Endothelial cell of umbilical vein (primary cell): ENCODE measurements at regions of chr14 and their contacts with region 1.

Region 1: GRCh38 chr14:49620182-49621113 is at the starts of genes MGAT2 and RPL36AL:
- DNase-seq: peak; percentile 99
- H3K4me3 ChIP-seq: peak within 1 kb of the TSS; percentile 59 to 95 (median 83)
- H3K27ac ChIP-seq: peak within 1 kb of the TSS; percentile 85
- H3K4me1 ChIP-seq: peaks cover 40% of the 10 kb centered on the region
- H3K27me3 ChIP-seq: no peaks in the 10 kb centered on the region
- CTCF ChIP-seq: peak; percentile 8 to 51
- POLR2A ChIP-seq: peak; percentile 94
- total RNA-seq, gene MGAT2: 68.1 and 72.6 TPM in 2 replicates
- total RNA-seq, gene RPL36AL: 251 and 260 TPM in 2 replicates

Region 2: GRCh38 chr14:49598485-49599300 is 21.8 kb before region 1 on chr14 and contains the start of gene LRR1:
- CTCF ChIA-PET with region 1: interaction called, 12 read pairs
- POLR2A ChIA-PET with region 1: interaction called, 15 read pairs
- dilution Hi-C with region 1: no loop called
- intact Hi-C with region 1: loop called (anchors 1 kb)
- DNase-seq: peak; percentile 90
- H3K4me3 ChIP-seq: peak within 1 kb of the TSS; percentile 57 to 100 (median 97)
- H3K27ac ChIP-seq: peak within 1 kb of the TSS; percentile 91
- H3K4me1 ChIP-seq: peaks cover 3% of the 10 kb centered on the region
- H3K27me3 ChIP-seq: no peaks in the 10 kb centered on the region
- CTCF ChIP-seq: no peak
- POLR2A ChIP-seq: peak; percentile 83
- total RNA-seq, gene LRR1: 30.1 and 30.9 TPM in 2 replicates

Region 3: GRCh38 chr14:49828640-49829039 is 208.2 kb after region 1 on chr14:
- CTCF ChIA-PET with region 1: no interaction called
- POLR2A ChIA-PET with region 1: no interaction called
- dilution Hi-C with region 1: no loop called
- intact Hi-C with region 1: no loop called
- DNase-seq: no peak
- H3K4me3 ChIP-seq: no peak overlapping the region
- H3K27ac ChIP-seq: no peak overlapping the region
- H3K4me1 ChIP-seq: no peaks in the 10 kb centered on the region
- H3K27me3 ChIP-seq: no peaks in the 10 kb centered on the region
- CTCF ChIP-seq: no peak
- POLR2A ChIP-seq: no peak